Activated CD4-positive, alpha-beta memory T cell treated with anti-CD3 and anti-CD28 coated beads, Interleukin-2, amount 10 ng/mL, durations not matched to agents 7 days and 5 days (primary cell): ENCODE measurements at regions of chr15 and their contacts with region 1.

Region 1: GRCh38 chr15:68559345-68560310 is 19.2 kb upstream of the CORO2B start:
- DNase-seq: peak; percentile 73
- H3K4me3 Mint-ChIP-seq: peak overlapping the region; percentile 57
- H3K27ac Mint-ChIP-seq: no peak overlapping the region
- H3K4me1 Mint-ChIP-seq: peaks cover 21% of the 10 kb centered on the region
- H3K27me3 Mint-ChIP-seq: peaks cover 50% of the 10 kb centered on the region

Region 2: DNA sequence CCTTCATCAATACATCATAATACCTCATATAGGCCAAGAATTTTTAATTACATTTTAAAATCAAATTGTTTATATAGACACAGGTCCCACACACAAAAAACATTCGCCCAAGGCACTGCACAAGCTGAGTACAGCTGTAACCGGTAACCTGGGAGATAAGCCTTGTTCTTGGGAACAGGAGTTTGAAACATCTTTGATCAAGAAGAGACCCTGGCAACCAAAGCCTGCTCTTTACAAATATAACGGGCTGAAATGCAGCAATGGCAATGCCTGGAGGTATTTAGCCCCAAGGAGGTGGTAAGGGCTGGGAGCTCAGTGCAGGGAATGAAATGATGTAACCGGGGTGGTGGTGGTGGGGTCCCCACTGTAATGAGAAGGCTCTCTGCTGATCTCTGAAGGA is 12.0 kb after region 1 on chr15:
- CTCF ChIA-PET with region 1: interaction called, 21 read pairs
- POLR2A ChIA-PET with region 1: no interaction called
- DNase-seq: no peak
- H3K4me3 Mint-ChIP-seq: no peak overlapping the region
- H3K27ac Mint-ChIP-seq: no peak overlapping the region
- H3K4me1 Mint-ChIP-seq: no peaks in the 10 kb centered on the region
- H3K27me3 Mint-ChIP-seq: peaks cover 50% of the 10 kb centered on the region

Region 3: GRCh38 chr15:68691705-68692104 is 132.1 kb after region 1 on chr15:
- CTCF ChIA-PET with region 1: no interaction called
- POLR2A ChIA-PET with region 1: no interaction called
- DNase-seq: no peak
- H3K4me3 Mint-ChIP-seq: no peak overlapping the region
- H3K27ac Mint-ChIP-seq: no peak overlapping the region
- H3K4me1 Mint-ChIP-seq: peaks cover 2% of the 10 kb centered on the region
- H3K27me3 Mint-ChIP-seq: peaks cover 13% of the 10 kb centered on the region

Region 4: DNA sequence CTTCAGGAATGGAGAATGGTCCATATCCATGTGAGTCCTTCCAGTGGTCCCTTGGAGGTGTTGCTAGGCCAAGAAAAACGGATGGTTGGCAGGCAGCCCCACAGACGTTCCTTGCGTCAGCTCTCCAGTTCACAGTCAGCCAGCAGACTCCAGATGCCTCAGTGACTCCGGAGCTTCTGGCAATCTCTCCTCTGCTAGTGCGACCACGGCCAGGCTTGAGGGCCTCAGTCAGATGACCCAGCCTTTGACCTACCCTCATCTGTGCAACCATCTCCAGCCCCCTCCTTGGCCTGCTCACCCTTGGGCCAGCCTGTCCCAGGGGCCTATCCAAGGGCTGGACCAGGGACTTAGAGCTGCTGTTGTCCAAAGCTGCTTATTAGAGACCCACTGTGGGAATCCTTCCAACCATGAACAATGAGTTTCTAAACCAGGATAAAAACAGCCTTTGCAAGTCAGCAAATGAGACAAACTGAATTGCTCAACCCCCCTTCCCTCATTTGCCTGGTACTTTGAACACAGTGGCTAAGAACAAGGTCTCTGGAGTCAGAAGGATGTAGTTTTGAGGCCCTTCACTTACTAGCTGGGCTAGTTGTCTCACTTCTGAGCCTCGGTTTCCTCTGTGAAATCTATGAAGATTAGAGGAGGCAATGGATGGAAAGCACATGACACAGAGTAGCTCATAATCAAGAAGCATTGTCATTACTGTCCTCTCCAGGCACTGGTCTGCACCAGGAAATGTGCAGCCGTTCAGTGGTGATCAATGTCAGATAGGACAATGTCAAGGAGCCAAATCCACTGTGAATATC is 216.2 kb after region 1 on chr15:
- CTCF ChIA-PET with region 1: no interaction called
- POLR2A ChIA-PET with region 1: no interaction called
- DNase-seq: no peak
- H3K4me3 Mint-ChIP-seq: no peak overlapping the region
- H3K27ac Mint-ChIP-seq: no peak overlapping the region
- H3K4me1 Mint-ChIP-seq: no peaks in the 10 kb centered on the region
- H3K27me3 Mint-ChIP-seq: peaks cover 3% of the 10 kb centered on the region

Region 5: DNA sequence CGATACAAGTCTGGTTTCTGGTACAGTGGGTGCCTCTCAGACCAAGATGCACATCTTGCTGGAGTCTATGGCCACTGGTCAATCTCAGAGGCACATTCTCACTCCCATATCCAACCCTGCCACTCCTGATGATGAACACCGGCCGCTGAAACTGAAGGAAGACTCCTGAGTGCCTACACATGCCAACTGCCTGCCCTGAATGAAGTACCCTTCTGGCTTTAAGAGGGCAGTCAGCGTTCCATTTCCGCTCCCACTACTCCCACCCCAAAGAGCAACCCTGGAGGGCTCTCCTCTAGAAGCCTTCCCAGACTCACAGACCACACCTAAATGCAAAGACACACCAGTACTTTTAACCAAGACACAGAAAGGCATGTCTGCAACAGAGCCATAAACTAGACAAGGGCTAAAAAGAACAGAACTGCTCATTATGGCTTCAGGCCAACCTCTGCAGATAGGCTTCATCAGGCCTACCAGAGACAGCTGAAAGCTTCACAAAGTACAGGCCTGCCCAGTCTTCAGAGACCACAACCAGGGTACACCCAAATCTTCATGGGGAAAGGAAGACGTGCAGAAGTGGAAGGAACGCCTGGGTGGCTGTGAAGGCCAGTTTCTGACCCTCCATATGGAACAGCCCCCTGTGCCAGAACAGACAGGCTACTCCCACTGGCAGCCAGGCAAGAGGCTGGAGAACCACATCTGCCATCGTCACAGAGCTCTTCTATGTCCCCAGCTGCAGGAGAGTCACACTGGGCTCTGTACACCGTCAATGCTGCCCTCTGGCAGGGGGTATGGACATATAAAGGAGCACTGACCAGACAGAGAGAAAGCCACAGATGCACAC is 246.8 kb after region 1 on chr15:
- CTCF ChIA-PET with region 1: no interaction called
- POLR2A ChIA-PET with region 1: no interaction called
- DNase-seq: no peak
- H3K4me3 Mint-ChIP-seq: no peak overlapping the region
- H3K27ac Mint-ChIP-seq: no peak overlapping the region
- H3K4me1 Mint-ChIP-seq: peaks cover 51% of the 10 kb centered on the region
- H3K27me3 Mint-ChIP-seq: no peaks in the 10 kb centered on the region

Region 6: DNA sequence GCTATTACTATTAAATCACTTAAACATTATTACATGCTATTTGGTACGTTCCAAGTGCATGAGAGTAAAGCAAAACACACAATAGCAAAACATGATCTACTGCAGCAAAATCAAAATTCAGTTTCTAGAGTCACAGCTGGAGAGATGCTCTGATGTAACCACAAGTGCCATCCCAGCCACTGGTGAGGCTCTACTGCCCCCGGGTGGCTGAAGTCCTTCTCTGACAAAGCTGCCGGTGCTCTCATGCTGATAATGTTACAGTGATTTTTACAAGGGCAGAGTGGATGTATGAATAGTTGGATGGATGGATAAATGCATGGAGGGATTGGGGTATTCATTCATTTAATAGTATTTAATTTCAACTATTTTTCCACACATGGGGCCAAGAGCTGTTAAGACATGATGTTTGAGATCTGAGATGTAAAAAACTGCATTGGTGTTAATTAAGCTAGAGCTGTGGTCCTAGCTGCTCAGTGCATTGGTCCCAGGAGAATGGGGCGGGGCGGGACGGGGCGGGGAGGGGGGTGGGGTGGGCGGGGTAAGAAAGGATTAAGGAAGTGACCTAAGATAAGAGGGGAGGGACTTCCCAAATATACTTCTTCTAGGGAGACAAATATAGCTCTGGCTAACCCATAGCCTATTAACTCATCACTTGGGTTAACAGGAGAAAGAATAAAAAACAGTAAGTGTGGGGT is 365.4 kb after region 1 on chr15:
- CTCF ChIA-PET with region 1: interaction called, 12 read pairs
- POLR2A ChIA-PET with region 1: interaction called, 3 read pairs
- DNase-seq: peak; percentile 62
- H3K4me3 Mint-ChIP-seq: no peak overlapping the region
- H3K27ac Mint-ChIP-seq: no peak overlapping the region
- H3K4me1 Mint-ChIP-seq: peaks cover under 1% of the 10 kb centered on the region
- H3K27me3 Mint-ChIP-seq: peaks cover 29% of the 10 kb centered on the region

Region 7: DNA sequence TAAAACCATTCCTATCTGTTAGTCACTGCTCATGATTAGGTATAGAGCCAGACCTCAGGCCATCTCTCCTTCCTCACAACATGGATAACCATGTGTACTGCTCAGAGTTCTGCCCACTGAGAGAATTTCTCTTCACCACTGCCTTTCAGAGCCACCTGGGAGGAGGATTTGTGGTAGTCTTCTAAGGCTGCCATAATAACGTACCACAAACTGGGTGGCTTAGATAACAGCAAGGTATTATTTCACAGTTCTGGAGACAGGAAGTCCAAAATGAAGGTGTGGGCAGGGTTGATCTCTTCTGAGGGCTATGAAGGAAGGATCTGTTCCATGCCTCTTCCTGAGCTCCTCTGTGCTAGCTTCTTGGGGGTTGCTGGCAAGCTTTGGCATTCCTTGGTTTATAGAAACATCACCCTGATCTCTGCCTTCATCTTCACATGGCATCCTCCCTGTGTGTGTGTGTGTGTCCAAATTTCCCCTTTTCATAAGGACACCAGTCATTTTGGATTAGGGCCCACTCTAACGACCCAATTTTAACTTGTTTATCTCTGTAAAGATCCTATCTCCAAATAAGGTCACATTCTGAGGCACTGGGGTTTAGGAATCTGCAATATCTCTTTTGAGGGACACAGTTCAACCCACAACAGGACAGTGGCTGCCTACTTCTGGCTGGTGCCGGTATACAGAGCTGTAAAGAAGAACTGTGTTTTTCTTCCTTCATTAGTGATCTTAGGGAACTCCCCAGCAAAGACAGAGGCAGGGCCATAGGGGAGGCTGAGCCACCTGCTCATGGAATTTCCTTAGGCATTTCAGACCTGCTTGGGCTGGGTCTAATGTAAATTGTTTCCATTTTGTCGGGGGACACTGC is 412.8 kb after region 1 on chr15:
- CTCF ChIA-PET with region 1: no interaction called
- POLR2A ChIA-PET with region 1: no interaction called
- DNase-seq: no peak
- H3K4me3 Mint-ChIP-seq: no peak overlapping the region
- H3K27ac Mint-ChIP-seq: no peak overlapping the region
- H3K4me1 Mint-ChIP-seq: no peaks in the 10 kb centered on the region
- H3K27me3 Mint-ChIP-seq: peaks cover 36% of the 10 kb centered on the region